Gastrocnemius medialis (tissue), 4 donors: ENCODE measurements at regions of chr2 and their contacts with region 1.

Region 1: DNA sequence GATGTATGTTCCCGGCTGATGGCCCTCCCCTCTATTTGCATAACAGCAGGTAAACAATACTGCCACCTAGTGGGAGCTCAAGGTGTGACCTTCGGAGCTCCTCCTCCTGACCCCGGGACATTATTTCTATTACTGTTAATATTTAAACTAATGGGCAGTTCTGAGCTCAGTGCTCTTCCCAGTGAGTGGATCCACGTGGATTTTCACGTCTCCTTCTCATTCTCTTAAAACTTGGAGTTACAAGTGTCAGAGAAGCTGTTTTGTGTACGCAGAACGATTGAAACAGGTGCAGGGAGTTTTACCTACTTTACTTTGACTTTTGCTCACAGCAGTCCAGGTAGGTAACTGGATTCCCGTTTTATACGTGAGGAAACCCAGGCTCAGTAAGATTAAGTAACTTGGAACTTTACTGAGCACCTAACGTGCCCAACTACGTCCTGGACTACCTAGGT is 127.3 kb downstream of the PRKCE start:
- DNase-seq: peak; percentile 40 to 60
- ATAC-seq: peak; percentile 75 to 85
- H3K4me3 ChIP-seq: no peak overlapping the region
- H3K27ac ChIP-seq: no peak overlapping the region
- H3K4me1 ChIP-seq: peaks cover 10 to 13% of the 10 kb centered on the region in 2 donors
- H3K27me3 ChIP-seq: no peaks in the 10 kb centered on the region
- CTCF ChIP-seq: peak; percentile 81 to 93 (median 85)
- POLR2A ChIP-seq: no peak

Region 2: GRCh38 chr2:45643543-45644542 is 134.9 kb before region 1 on chr2:
- in situ Hi-C with region 1: loop called (anchors 5 kb)
- intact Hi-C with region 1: loop called (anchors 1 kb)
- DNase-seq: peak; percentile 18 to 47
- ATAC-seq: peak; percentile 84 to 93
- H3K4me3 ChIP-seq: peak overlapping the region; percentile 46 to 70 (median 52)
- H3K27ac ChIP-seq: no peak overlapping the region
- H3K4me1 ChIP-seq: peaks cover 5 to 9% of the 10 kb centered on the region in 2 donors
- H3K27me3 ChIP-seq: peaks cover 0 to 7% (median 0%) of the 10 kb centered on the region in 3 donors
- CTCF ChIP-seq: peak; percentile 89 to 100 (median 99)
- POLR2A ChIP-seq: no peak